Natural killer cell (primary cell): ENCODE measurements at regions of chr19 and their contacts with region 1.

Region 1: GRCh38 chr19:52690369-52691214 is 44.3 kb downstream of the ZNF611 start:
- DNase-seq: peak; percentile 91 to 95
- ATAC-seq: peak; percentile 93 to 97 (median 95)
- H3K4me3 ChIP-seq: peak overlapping the region; percentile 84
- H3K4me3 Mint-ChIP-seq: peak overlapping the region; percentile 97
- H3K27ac ChIP-seq: peak overlapping the region; percentile 81
- H3K27ac Mint-ChIP-seq: peak overlapping the region; percentile 92 to 93
- H3K4me1 ChIP-seq: peaks cover 18% of the 10 kb centered on the region
- H3K4me1 Mint-ChIP-seq: peaks cover 29 to 34% of the 10 kb centered on the region in 2 donors
- H3K27me3 ChIP-seq: no peaks in the 10 kb centered on the region
- H3K27me3 Mint-ChIP-seq: no peaks in the 10 kb centered on the region
- CTCF ChIP-seq: no peak

Region 2: DNA sequence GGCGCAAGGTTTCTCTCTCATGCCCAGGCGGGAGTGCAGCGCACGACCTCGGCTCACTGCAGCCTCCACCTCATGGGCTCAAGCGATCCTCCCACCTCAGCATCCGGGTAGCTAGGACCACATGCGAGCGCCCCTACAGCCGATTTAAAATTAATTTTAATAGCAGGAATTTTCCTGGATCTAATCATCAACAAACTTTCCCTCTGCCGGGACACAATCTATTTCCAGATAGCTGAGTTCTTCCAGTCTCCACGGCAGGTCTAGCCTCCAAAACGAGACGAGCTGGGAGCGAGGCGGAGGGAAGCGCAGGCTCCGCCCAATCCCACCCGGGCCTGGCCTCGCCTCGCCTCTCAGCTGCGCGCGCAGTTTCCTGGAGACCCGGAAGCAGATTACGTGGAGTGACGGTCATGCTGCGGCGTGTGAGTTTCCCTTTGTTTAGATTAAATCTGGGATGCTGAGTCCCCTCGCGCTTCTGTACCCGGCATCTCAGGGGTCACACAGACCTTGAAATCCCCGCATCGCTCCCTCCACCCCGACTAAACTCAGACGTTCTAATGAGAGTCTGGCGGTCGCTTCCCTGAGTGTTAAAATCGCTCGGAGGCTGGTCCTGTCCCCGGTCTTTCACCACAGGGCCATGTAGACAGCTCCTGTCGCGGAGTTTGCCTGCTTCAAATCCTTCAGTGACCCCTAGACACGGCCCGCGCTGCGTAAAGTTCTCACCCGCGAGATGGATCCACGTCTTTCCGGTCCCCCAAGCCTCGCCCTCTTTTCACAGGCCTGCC is 320.8 kb before region 1 on chr19 and contains the start of gene ZNF880:
- intact Hi-C with region 1: no loop called
- DNase-seq: peak; percentile 93
- ATAC-seq: peak; percentile 93 to 96 (median 94)
- H3K4me3 ChIP-seq: peak within 1 kb of the TSS; percentile 89
- H3K4me3 Mint-ChIP-seq: peak within 1 kb of the TSS; percentile 96
- H3K27ac ChIP-seq: peak within 1 kb of the TSS; percentile 99
- H3K27ac Mint-ChIP-seq: peak within 1 kb of the TSS; percentile 97 to 99
- H3K4me1 ChIP-seq: peaks cover 11% of the 10 kb centered on the region
- H3K4me1 Mint-ChIP-seq: peaks cover 12 to 14% of the 10 kb centered on the region in 2 donors
- H3K27me3 ChIP-seq: no peaks in the 10 kb centered on the region
- H3K27me3 Mint-ChIP-seq: no peaks in the 10 kb centered on the region
- CTCF ChIP-seq: no peak
- total RNA-seq, gene ZNF880: 23.1 to 33.2 (median 31.2) TPM

Region 3: GRCh38 chr19:52535771-52536447 is 154.7 kb before region 1 on chr19:
- intact Hi-C with region 1: loop called (anchors 10 kb)
- DNase-seq: peak; percentile 86 to 92
- ATAC-seq: peak; percentile 91 to 98 (median 92)
- H3K4me3 ChIP-seq: peak overlapping the region; percentile 61
- H3K4me3 Mint-ChIP-seq: peak overlapping the region; percentile 95
- H3K27ac ChIP-seq: peak overlapping the region; percentile 73
- H3K27ac Mint-ChIP-seq: peak overlapping the region; percentile 93 to 94
- H3K4me1 ChIP-seq: peaks cover 30% of the 10 kb centered on the region
- H3K4me1 Mint-ChIP-seq: peaks cover 31% of the 10 kb centered on the region in 2 donors
- H3K27me3 ChIP-seq: no peaks in the 10 kb centered on the region
- H3K27me3 Mint-ChIP-seq: no peaks in the 10 kb centered on the region
- CTCF ChIP-seq: peak; percentile 21

Region 4: GRCh38 chr19:52648336-52649016 is 42.1 kb before region 1 on chr19:
- intact Hi-C with region 1: loop called (anchors 5 kb)
- DNase-seq: no peak
- ATAC-seq: no peak
- H3K4me3 ChIP-seq: no peak overlapping the region
- H3K4me3 Mint-ChIP-seq: no peak overlapping the region
- H3K27ac ChIP-seq: no peak overlapping the region
- H3K27ac Mint-ChIP-seq: no peak overlapping the region
- H3K4me1 ChIP-seq: no peaks in the 10 kb centered on the region
- H3K4me1 Mint-ChIP-seq: no peaks in the 10 kb centered on the region
- H3K27me3 ChIP-seq: no peaks in the 10 kb centered on the region
- H3K27me3 Mint-ChIP-seq: no peaks in the 10 kb centered on the region
- CTCF ChIP-seq: no peak

Region 5: DNA sequence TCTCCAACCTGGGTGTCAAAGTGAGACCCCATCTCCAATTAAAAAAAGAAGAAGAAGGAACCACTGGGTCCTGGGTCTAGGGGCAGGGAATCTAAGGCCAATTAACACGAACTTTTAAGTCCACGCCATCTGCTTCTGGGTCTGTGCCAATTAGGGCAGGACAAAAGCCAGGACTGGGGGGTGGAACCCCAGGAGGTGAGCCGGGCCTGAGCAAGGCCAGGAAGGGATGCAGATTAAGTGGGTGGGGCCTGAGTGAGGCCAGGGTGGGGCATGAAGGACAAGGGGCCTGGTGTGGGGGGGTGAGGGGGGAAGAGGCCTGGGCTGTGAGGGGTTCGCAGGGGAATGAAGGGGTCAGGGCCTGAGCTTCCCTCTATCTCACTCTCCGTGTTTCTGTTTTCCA is 26.1 kb before region 1 on chr19:
- intact Hi-C with region 1: no loop called
- DNase-seq: no peak
- ATAC-seq: no peak
- H3K4me3 ChIP-seq: no peak overlapping the region
- H3K4me3 Mint-ChIP-seq: no peak overlapping the region
- H3K27ac ChIP-seq: no peak overlapping the region
- H3K27ac Mint-ChIP-seq: no peak overlapping the region
- H3K4me1 ChIP-seq: no peaks in the 10 kb centered on the region
- H3K4me1 Mint-ChIP-seq: peaks cover 9 to 15% of the 10 kb centered on the region in 2 donors
- H3K27me3 ChIP-seq: no peaks in the 10 kb centered on the region
- H3K27me3 Mint-ChIP-seq: no peaks in the 10 kb centered on the region
- CTCF ChIP-seq: no peak